A673 (cell line): ENCODE measurements at regions of chrX and their contacts with region 1.

Region 1: GRCh38 chrX:73855546-73855945 is 292.5 kb downstream of the CHIC1 start:
- DNase-seq: peak; percentile 81
- H3K4me3 ChIP-seq: no peak overlapping the region
- H3K27ac ChIP-seq: no peak overlapping the region
- H3K4me1 ChIP-seq: no peaks in the 10 kb centered on the region
- H3K27me3 ChIP-seq: no peaks in the 10 kb centered on the region
- CTCF ChIP-seq: peak; percentile 90

Region 2: DNA sequence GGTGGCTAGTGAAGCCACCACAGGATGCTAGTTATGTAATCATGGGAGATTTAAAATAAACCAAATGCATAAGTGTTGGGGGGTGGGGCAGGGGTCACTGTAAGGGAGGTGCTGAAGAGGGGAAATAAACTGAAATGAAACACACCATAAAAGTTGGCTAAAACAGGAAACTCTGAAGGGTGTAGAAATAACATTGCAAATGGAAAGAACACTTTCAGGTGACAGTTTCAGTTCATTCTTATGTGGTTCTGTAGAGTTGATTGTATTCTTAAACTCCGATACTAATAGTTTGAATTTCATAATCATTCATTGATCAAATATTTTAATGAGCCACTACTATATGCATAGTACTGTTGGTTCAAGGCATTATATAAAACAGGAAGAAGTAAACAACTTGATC is 1363.0 kb before region 1 on chrX:
- CTCF ChIA-PET with region 1: no interaction called
- POLR2A ChIA-PET with region 1: no interaction called
- intact Hi-C with region 1: no loop called
- DNase-seq: no peak
- H3K4me3 ChIP-seq: no peak overlapping the region
- H3K27ac ChIP-seq: no peak overlapping the region
- H3K4me1 ChIP-seq: no peaks in the 10 kb centered on the region
- H3K27me3 ChIP-seq: no peaks in the 10 kb centered on the region
- CTCF ChIP-seq: no peak

Region 3: DNA sequence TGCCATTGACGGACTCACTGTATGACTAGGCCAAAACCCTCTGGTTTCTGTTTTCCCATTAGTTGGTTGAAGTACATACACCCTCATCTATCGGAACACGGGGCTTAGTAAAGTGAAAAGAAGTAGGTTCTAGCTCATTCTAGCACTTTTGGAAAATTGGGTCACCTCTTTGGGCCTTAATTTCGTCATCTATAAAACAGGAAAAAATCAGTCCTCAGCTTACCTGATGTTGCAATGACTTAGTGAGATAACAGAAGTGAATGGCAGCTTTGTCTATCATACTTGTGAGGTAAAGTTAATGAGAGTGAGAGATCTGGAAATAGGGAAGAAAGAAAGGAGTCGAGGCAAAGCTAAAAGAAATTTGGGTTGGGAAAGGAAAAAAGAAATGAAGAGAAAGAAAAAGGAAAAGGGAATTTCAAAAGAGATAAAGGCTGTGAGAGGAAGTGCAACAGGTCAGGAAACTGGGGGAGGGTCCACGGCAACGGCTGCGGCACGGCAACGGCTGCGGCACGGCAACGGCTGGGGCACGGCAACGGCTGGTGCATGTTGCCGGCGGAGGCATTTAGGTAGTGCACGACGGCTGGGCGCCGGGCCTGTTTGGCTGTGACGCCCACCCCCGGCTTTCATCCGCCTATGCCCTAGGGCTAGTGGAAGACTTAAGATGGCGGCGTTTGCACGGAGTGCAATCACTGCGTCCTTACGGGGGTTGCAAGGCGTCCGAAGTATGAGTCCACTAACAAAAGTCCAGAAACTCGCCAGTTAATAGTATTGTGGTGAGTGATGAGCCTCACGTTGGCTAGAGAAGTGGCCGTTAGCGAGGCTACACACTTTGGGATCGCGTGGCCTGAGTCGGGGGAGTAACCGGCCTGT is 88.4 kb after region 1 on chrX:
- CTCF ChIA-PET with region 1: no interaction called
- POLR2A ChIA-PET with region 1: no interaction called
- intact Hi-C with region 1: loop called (anchors 2 kb)
- DNase-seq: peak; percentile 96
- H3K4me3 ChIP-seq: peak overlapping the region; percentile 89
- H3K27ac ChIP-seq: peak overlapping the region; percentile 95
- H3K4me1 ChIP-seq: peaks cover 4% of the 10 kb centered on the region
- H3K27me3 ChIP-seq: no peaks in the 10 kb centered on the region
- CTCF ChIP-seq: no peak

Region 4: GRCh38 chrX:74015379-74016019 is 160.0 kb after region 1 on chrX:
- CTCF ChIA-PET with region 1: interaction called, 4 read pairs
- POLR2A ChIA-PET with region 1: no interaction called
- intact Hi-C with region 1: loop called (anchors 1 kb)
- DNase-seq: peak; percentile 85
- H3K4me3 ChIP-seq: no peak overlapping the region
- H3K27ac ChIP-seq: no peak overlapping the region
- H3K4me1 ChIP-seq: no peaks in the 10 kb centered on the region
- H3K27me3 ChIP-seq: no peaks in the 10 kb centered on the region
- CTCF ChIP-seq: peak; percentile 94

Region 5: DNA sequence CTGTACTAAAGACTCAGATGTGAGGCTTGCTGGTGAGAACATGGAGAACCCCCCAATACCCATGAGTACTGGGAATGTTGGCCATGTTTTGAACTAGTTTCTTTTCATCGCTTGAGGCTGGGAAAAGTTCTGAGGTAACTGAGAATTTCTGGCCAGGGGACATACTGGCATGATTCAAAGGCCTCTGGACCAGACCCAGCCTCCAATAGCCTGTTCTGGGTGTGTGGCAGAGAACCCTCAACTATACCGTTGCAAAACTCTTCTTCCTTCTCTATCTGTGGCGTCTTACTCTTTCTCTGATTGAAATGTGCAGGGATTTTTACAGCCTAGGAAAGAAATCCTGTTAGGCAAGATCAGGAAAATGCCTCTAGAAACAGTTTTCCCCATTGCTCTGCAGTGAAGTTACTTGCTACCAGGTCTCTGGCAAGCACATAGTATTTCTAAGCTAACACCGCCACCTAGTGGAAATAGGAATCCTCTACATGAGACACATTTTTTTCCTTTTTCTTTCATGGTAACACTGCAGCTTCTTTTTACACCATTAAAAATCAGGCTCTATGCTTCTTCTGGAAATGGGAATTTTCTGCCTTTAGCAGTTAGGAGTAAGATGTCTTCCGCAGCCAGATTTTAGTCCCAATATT is 277.7 kb after region 1 on chrX:
- CTCF ChIA-PET with region 1: interaction called, 3 read pairs
- POLR2A ChIA-PET with region 1: no interaction called
- intact Hi-C with region 1: loop called (anchors 1 kb)
- DNase-seq: peak; percentile 73
- H3K4me3 ChIP-seq: no peak overlapping the region
- H3K27ac ChIP-seq: no peak overlapping the region
- H3K4me1 ChIP-seq: no peaks in the 10 kb centered on the region
- H3K27me3 ChIP-seq: no peaks in the 10 kb centered on the region
- CTCF ChIP-seq: peak; percentile 77

Region 6: GRCh38 chrX:74343343-74344279 is 488.1 kb after region 1 on chrX:
- CTCF ChIA-PET with region 1: no interaction called
- POLR2A ChIA-PET with region 1: no interaction called
- intact Hi-C with region 1: loop called (anchors 1 kb)
- DNase-seq: peak; percentile 94
- H3K4me3 ChIP-seq: no peak overlapping the region
- H3K27ac ChIP-seq: no peak overlapping the region
- H3K4me1 ChIP-seq: peaks cover 4% of the 10 kb centered on the region
- H3K27me3 ChIP-seq: no peaks in the 10 kb centered on the region
- CTCF ChIP-seq: peak; percentile 73

Region 7: DNA sequence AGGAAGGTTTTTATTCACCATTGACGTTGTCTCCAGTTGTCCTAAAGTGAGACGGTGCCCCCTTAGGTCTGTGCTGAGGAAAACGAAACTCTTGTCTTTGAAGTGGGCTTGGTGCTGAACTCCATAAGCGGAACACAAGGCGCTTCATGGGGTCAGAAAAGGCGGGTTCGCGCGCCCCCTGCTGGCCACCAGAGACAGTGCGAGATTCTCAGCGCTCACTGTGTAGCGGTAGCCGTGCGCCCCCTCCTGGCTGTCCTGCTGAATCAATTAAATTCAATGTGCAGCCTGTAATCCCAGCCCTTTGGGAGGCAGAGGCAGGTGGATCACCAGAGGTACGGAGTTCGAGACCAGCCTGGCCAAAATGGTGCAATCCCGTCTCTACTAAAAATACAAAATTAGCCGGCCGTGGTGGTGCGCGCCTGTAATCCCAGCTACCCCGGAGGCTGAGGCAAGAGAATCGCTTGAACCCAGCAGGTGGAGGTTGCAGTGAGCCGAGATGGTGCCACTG is 694.8 kb after region 1 on chrX:
- CTCF ChIA-PET with region 1: no interaction called
- POLR2A ChIA-PET with region 1: no interaction called
- intact Hi-C with region 1: loop called (anchors 5 kb)
- DNase-seq: peak; percentile 82
- H3K4me3 ChIP-seq: no peak overlapping the region
- H3K27ac ChIP-seq: no peak overlapping the region
- H3K4me1 ChIP-seq: no peaks in the 10 kb centered on the region
- H3K27me3 ChIP-seq: no peaks in the 10 kb centered on the region
- CTCF ChIP-seq: peak; percentile 99